Calu3 (cell line): ENCODE measurements at regions of chr17 and their contacts with region 1.

Region 1: DNA sequence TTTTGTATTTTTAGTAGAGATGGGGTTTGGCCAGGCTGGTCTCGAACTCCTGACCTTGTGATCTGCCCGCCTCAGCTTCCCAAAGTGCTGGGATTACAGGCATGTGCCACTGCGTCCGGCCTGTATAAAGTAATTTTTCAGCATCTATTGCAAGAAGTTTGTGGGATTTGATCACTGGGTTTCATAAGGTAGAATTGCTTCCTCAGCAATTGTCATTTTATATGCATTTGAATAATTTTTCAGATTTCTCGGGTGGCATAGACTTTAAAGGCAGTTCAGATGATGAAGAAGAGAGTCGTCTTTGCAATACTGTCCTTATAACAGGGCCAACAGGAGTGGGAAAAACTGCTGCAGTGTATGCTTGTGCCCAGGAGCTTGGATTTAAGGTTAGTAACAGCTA is 37.0 kb downstream of the TEFM start:
- DNase-seq: no peak
- H3K4me3 Mint-ChIP-seq: no peak overlapping the region
- H3K27ac Mint-ChIP-seq: no peak overlapping the region
- H3K4me1 Mint-ChIP-seq: no peaks in the 10 kb centered on the region
- H3K27me3 Mint-ChIP-seq: no peaks in the 10 kb centered on the region
- CTCF ChIP-seq: no peak

Region 2: GRCh38 chr17:30858561-30859245 is 10.3 kb before region 1 on chr17:
- CTCF ChIA-PET with region 1: interaction called, 10 read pairs
- intact Hi-C with region 1: no loop called
- DNase-seq: no peak
- H3K4me3 Mint-ChIP-seq: no peak overlapping the region
- H3K27ac Mint-ChIP-seq: no peak overlapping the region
- H3K4me1 Mint-ChIP-seq: no peaks in the 10 kb centered on the region
- H3K27me3 Mint-ChIP-seq: no peaks in the 10 kb centered on the region
- CTCF ChIP-seq: no peak

Region 3: GRCh38 chr17:31236712-31237111 is 367.7 kb after region 1 on chr17:
- CTCF ChIA-PET with region 1: interaction called, 10 read pairs
- intact Hi-C with region 1: no loop called
- DNase-seq: no peak
- H3K4me3 Mint-ChIP-seq: no peak overlapping the region
- H3K27ac Mint-ChIP-seq: no peak overlapping the region
- H3K4me1 Mint-ChIP-seq: no peaks in the 10 kb centered on the region
- H3K27me3 Mint-ChIP-seq: no peaks in the 10 kb centered on the region
- CTCF ChIP-seq: no peak